Esophagus squamous epithelium (tissue), 5 donors: ENCODE measurements at regions of chr6 and their contacts with region 1.

Region 1: GRCh38 chr6:158704181-158704822 is 54.4 kb downstream of the SYTL3 start:
- DNase-seq: peak; percentile 20
- H3K4me3 ChIP-seq: peak overlapping the region; percentile 24 to 66 (median 39)
- H3K27ac ChIP-seq: peak overlapping the region; percentile 66 to 81 (median 75)
- H3K4me1 ChIP-seq: peaks cover 30 to 58% (median 35%) of the 10 kb centered on the region in 3 donors
- H3K27me3 ChIP-seq: no peaks in the 10 kb centered on the region
- CTCF ChIP-seq: peak; percentile 97 to 100 (median 99)
- POLR2A ChIP-seq: peak in 1 of 4 donors; percentile 26

Region 2: GRCh38 chr6:158970640-158971275 is 266.5 kb after region 1 on chr6:
- intact Hi-C with region 1: loop called (anchors 2 kb)
- DNase-seq: no peak
- H3K4me3 ChIP-seq: no peak overlapping the region
- H3K27ac ChIP-seq: peak overlapping the region in 2 of 4 donors; percentile 37 to 53
- H3K4me1 ChIP-seq: peaks cover 0 to 5% (median 0%) of the 10 kb centered on the region in 3 donors
- H3K27me3 ChIP-seq: no peaks in the 10 kb centered on the region
- CTCF ChIP-seq: no peak
- POLR2A ChIP-seq: no peak